HAP-1 (cell line): ENCODE measurements at regions of chr13 and their contacts with region 1.

Region 1: DNA sequence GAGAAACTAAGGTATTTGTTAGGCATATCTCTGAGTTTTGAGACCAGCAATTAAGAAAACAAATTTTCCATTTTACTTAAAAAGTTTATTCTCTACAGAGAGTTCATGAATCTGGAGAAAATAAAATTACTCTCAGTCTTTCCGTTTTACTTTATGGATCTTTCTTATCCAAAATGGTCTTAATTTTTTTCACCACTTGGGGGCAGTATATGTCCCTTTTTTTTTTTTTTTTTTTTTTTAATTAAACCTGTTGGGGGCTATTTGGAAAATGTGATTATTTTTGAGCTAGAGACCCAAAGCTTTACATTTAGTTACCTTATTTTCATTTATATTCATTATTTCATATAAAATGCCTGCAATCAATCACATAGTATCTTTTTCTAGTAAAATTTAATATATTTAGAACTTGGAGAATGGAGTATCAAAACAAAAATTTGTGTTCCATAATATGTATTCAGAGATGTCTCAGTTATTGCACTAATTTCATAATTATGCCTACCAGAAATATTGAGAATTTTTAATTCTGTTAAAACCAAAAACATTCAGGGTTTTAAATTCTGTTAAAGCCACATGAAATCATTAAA is 27.1 kb downstream of the PIBF1 start:
- DNase-seq: no peak
- H3K4me3 ChIP-seq: no peak overlapping the region
- H3K4me1 ChIP-seq: peaks cover 3% of the 10 kb centered on the region; the same call in 1 of the 2 replicates
- H3K27me3 ChIP-seq: no peaks in the 10 kb centered on the region

Region 2: GRCh38 chr13:72507419-72508199 is 301.4 kb before region 1 on chr13:
- in situ Hi-C with region 1: no loop called
- DNase-seq: no peak
- H3K4me3 ChIP-seq: no peak overlapping the region
- H3K4me1 ChIP-seq: peaks cover 2% of the 10 kb centered on the region; the same call in 1 of the 2 replicates
- H3K27me3 ChIP-seq: no peaks in the 10 kb centered on the region

Region 3: DNA sequence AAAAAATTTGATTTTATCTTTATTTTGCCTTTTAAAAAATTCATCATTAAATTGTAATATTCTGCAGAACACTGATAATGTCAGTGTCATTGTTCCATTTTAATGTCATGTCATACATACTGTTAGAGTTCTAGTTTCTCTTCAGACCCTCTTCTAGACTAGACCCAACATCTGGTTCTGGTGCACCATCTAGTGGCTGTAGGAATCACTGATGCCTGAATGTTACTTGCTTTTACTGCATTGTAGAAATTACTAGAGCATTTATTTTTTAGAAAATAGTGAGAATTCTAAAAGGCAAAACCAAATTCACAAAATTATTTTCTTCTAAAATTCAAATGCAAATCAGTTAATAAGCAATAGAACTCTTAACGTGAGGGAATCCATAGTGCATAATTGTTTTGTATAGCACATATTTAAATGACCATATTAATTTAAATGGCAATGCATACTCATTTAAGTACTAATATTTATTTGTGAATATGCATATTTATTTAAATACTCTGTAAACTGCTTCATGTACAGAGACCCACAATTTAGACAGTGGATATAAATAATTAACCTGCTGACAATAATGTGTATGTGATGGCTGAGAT is 899.5 kb after region 1 on chr13:
- in situ Hi-C with region 1: loop called (anchors 25 kb)
- DNase-seq: peak; percentile 73 to 74
- H3K4me3 ChIP-seq: no peak overlapping the region
- H3K4me1 ChIP-seq: no peaks in the 10 kb centered on the region
- H3K27me3 ChIP-seq: no peaks in the 10 kb centered on the region